ENCODE measurements at regions of chr12 and their contacts with region 1.

Region 1: DNA sequence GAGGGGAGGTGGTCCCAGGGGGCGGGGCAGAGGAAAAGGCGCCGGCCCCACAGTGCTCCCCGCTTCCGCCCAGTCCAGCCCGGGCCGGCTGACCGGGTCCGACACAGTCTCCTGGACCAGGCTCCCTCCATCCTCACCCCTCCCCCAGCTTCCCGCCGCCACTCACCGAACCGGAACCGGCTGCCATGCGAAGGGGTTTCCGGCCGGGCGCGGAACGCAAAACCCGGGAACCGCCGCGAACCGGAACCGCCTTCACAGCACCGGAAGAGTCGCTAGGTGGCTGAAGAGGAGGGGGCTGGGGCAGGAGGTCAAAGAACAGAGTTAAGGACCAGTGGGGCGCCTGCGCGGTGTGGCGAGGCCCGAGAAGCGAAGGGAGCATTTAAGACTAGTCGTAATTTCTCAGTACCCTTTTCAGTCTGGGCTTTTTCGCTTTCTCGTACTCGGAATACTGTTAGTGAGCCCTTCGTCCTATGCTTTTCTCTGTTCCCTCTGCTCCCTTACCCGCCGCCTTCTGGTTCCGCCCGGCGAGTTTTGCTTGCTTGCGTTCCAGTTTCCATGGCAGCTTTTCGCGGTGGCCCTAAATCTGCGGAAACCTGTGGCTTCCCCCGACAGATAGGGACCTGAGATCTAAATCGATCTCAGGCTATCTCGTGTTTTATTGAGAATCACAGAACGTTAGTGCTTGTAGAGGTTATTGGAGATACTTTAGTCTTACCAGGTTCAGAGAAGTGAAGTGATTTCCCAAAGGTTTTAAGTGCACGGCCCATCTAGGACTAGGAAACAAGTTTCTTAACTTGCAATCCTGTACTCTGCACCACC is at the start of gene SENP1:
- DNase-seq: peak; percentile 91 to 96 (median 95)
- ATAC-seq: peak; percentile 96 to 98
- H3K4me3 ChIP-seq: peak within 1 kb of the TSS; percentile 95
- H3K27ac ChIP-seq: peak within 1 kb of the TSS; percentile 99
- H3K4me1 ChIP-seq: peaks cover 3% of the 10 kb centered on the region
- H3K27me3 ChIP-seq: no peaks in the 10 kb centered on the region
- total RNA-seq, gene SENP1: 7.7 to 12.8 (median 9.0) TPM

Region 2: GRCh38 chr12:48157018-48157888 is 51.2 kb after region 1 on chr12 and contains the start of gene ASB8:
- intact Hi-C with region 1: loop called in 2 of 4 experiments (anchors 10 kb)
- DNase-seq: peak; percentile 99 to 100 (median 100)
- ATAC-seq: peak; percentile 98 to 99
- H3K4me3 ChIP-seq: peak within 1 kb of the TSS; percentile 61
- H3K27ac ChIP-seq: peak within 1 kb of the TSS; percentile 92
- H3K4me1 ChIP-seq: peaks cover 2% of the 10 kb centered on the region
- H3K27me3 ChIP-seq: no peaks in the 10 kb centered on the region
- total RNA-seq, gene ASB8: 58.5 to 69.9 (median 62.4) TPM

Region 3: GRCh38 chr12:48237162-48237561 is 131.1 kb after region 1 on chr12:
- intact Hi-C with region 1: no loop called
- DNase-seq: no peak
- ATAC-seq: no peak
- H3K4me3 ChIP-seq: no peak overlapping the region
- H3K27ac ChIP-seq: no peak overlapping the region
- H3K4me1 ChIP-seq: no peaks in the 10 kb centered on the region
- H3K27me3 ChIP-seq: no peaks in the 10 kb centered on the region

Measured in right cardiac atrium (tissue), 5 donors.